CD4-positive, alpha-beta memory T cell (primary cell): ENCODE measurements at regions of chr13 and their contacts with region 1.

Region 1: DNA sequence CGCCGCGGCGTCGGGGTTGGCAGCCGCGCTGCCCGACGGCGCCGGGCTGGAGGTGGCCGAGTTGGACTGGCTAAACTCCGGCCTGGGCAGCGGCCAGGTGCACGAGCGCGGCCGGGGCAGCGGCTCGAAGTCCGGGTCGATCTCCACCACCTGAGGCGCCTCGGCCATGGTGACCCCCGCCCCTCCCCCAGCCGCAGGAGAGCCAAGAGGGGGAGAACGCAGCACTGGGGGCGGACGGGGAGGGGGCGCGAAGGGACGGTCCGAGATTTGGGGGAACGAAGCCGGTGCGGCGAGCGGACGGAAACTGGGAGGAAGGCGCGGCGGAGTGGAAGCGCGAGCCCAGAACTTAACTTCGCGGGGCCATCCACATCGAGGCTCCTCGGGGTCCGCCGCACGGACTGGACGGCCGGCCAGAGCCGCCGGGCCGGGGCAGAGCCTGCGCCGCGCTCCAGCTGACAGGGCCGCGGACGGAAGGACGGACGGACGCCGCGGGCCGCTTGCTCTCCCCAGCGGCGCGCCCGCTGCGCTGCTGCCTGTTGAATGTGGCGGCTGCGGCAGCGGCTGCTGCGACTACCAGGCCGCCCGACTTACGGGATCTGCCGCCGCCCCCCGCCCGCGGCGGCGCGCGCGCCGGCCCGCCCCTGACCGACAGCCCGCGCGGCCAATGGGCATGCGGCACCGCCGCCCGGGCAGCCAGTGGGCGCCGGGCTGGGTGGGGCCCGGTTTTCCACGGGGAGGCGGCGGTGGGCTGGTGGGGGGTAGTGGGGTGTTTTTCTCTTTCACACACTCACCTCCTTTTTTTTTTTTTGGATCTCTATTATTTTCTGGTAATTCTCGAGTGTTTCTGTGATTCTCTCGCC is at the start of gene FOXO1:
- DNase-seq: peak; percentile 89 to 95 (median 94)
- H3K4me3 ChIP-seq: peak within 1 kb of the TSS; percentile 61 to 92
- H3K4me3 Mint-ChIP-seq: peak within 1 kb of the TSS; percentile 91 to 97 (median 94)
- H3K27ac ChIP-seq: peak within 1 kb of the TSS; percentile 86
- H3K27ac Mint-ChIP-seq: peak within 1 kb of the TSS; percentile 92 to 97 (median 94)
- H3K4me1 ChIP-seq: peaks cover 31% of the 10 kb centered on the region
- H3K4me1 Mint-ChIP-seq: peaks cover 22 to 45% (median 30%) of the 10 kb centered on the region in 4 donors
- H3K27me3 ChIP-seq: no peaks in the 10 kb centered on the region
- H3K27me3 Mint-ChIP-seq: no peaks in the 10 kb centered on the region
- total RNA-seq, gene FOXO1: 68.0 to 68.4 TPM

Region 2: GRCh38 chr13:39777527-39778061 is 888.7 kb before region 1 on chr13:
- CTCF ChIA-PET with region 1: no interaction called
- POLR2A ChIA-PET with region 1: interaction called, 4 read pairs
- intact Hi-C with region 1: loop called (anchors 5 kb)
- DNase-seq: peak; percentile 28 to 51 (median 37)
- H3K4me3 ChIP-seq: no peak overlapping the region
- H3K4me3 Mint-ChIP-seq: no peak overlapping the region
- H3K27ac ChIP-seq: no peak overlapping the region
- H3K27ac Mint-ChIP-seq: peak overlapping the region in 5 of 7 donors; percentile 22 to 78 (median 62)
- H3K4me1 ChIP-seq: peaks cover 29% of the 10 kb centered on the region
- H3K4me1 Mint-ChIP-seq: peaks cover 25 to 33% (median 29%) of the 10 kb centered on the region in 4 donors
- H3K27me3 ChIP-seq: no peaks in the 10 kb centered on the region
- H3K27me3 Mint-ChIP-seq: no peaks in the 10 kb centered on the region

Region 3: GRCh38 chr13:40190641-40191100 is 475.6 kb before region 1 on chr13:
- CTCF ChIA-PET with region 1: interaction called, 4 read pairs
- POLR2A ChIA-PET with region 1: interaction called, 40 read pairs
- intact Hi-C with region 1: loop called (anchors 1 kb)
- DNase-seq: peak; percentile 70 to 88 (median 75)
- H3K4me3 ChIP-seq: peak overlapping the region in 1 of 2 donors; percentile 37
- H3K4me3 Mint-ChIP-seq: peak overlapping the region; percentile 11 to 90 (median 83)
- H3K27ac ChIP-seq: peak overlapping the region; percentile 56
- H3K27ac Mint-ChIP-seq: peak overlapping the region; percentile 95 to 98 (median 96)
- H3K4me1 ChIP-seq: peaks cover 68% of the 10 kb centered on the region
- H3K4me1 Mint-ChIP-seq: peaks cover 61 to 79% (median 69%) of the 10 kb centered on the region in 4 donors
- H3K27me3 ChIP-seq: no peaks in the 10 kb centered on the region
- H3K27me3 Mint-ChIP-seq: no peaks in the 10 kb centered on the region

Region 4: GRCh38 chr13:40438999-40439797 is 227.1 kb before region 1 on chr13:
- CTCF ChIA-PET with region 1: no interaction called
- POLR2A ChIA-PET with region 1: interaction called, 3 read pairs
- intact Hi-C with region 1: loop called (anchors 5 kb)
- DNase-seq: peak in 2 of 5 donors; percentile 22 to 29
- H3K4me3 ChIP-seq: no peak overlapping the region
- H3K4me3 Mint-ChIP-seq: peak overlapping the region; percentile 58 to 87 (median 80)
- H3K27ac ChIP-seq: no peak overlapping the region
- H3K27ac Mint-ChIP-seq: peak overlapping the region; percentile 8 to 89 (median 77)
- H3K4me1 ChIP-seq: peaks cover 45% of the 10 kb centered on the region
- H3K4me1 Mint-ChIP-seq: peaks cover 28 to 48% (median 34%) of the 10 kb centered on the region in 4 donors
- H3K27me3 ChIP-seq: no peaks in the 10 kb centered on the region
- H3K27me3 Mint-ChIP-seq: no peaks in the 10 kb centered on the region

Region 5: DNA sequence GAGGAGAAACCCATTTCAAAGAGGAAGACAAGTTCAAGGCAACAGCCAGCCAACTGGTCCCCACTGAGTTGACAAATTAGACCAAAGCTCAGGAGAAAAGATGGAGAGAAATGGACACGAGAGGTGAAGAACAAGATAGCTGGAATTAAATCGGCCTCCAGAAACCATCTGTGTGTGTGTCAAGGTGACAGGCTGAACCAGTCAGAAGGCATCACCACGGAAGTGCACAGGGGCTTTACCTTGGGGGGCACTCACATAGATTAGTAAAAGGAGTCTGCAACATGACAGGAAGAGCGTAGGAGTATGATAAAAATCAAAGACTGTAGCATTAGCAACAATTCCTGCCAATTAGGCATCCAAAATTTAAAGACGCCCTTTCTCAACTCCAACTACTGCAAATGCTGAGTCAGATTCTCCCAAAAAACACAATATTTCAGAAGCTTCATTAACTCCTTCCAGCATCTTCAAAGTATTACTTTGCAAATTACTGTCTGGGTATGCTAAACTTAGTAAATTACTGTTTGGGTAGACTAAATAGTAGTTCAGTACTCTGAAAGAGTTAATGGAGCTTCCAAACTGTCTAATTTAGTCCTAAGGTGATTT is 66.0 kb before region 1 on chr13:
- CTCF ChIA-PET with region 1: no interaction called
- POLR2A ChIA-PET with region 1: interaction called, 15 read pairs
- intact Hi-C with region 1: no loop called
- DNase-seq: peak in 2 of 5 donors; percentile 27 to 70
- H3K4me3 ChIP-seq: no peak overlapping the region
- H3K4me3 Mint-ChIP-seq: peak overlapping the region in 7 of 8 donors; percentile 57 to 73 (median 67)
- H3K27ac ChIP-seq: peak overlapping the region; percentile 39
- H3K27ac Mint-ChIP-seq: peak overlapping the region; percentile 59 to 90 (median 85)
- H3K4me1 ChIP-seq: peaks cover 95% of the 10 kb centered on the region
- H3K4me1 Mint-ChIP-seq: peaks cover 73 to 91% (median 85%) of the 10 kb centered on the region in 4 donors
- H3K27me3 ChIP-seq: no peaks in the 10 kb centered on the region
- H3K27me3 Mint-ChIP-seq: no peaks in the 10 kb centered on the region

Region 6: GRCh38 chr13:40653527-40654318 is 12.6 kb before region 1 on chr13:
- CTCF ChIA-PET with region 1: interaction called, 6 read pairs
- POLR2A ChIA-PET with region 1: interaction called, 39 read pairs
- intact Hi-C with region 1: loop called (anchors 1 kb)
- DNase-seq: peak in 4 of 5 donors; percentile 31 to 51 (median 43)
- H3K4me3 ChIP-seq: peak overlapping the region in 1 of 2 donors; percentile 29
- H3K4me3 Mint-ChIP-seq: peak overlapping the region; percentile 66 to 88 (median 80)
- H3K27ac ChIP-seq: peak overlapping the region; percentile 37
- H3K27ac Mint-ChIP-seq: peak overlapping the region; percentile 82 to 95 (median 90)
- H3K4me1 ChIP-seq: peaks cover 97% of the 10 kb centered on the region
- H3K4me1 Mint-ChIP-seq: peaks cover 60 to 99% (median 85%) of the 10 kb centered on the region in 4 donors
- H3K27me3 ChIP-seq: no peaks in the 10 kb centered on the region
- H3K27me3 Mint-ChIP-seq: no peaks in the 10 kb centered on the region